ENCODE measurements at regions of chr3 and their contacts with region 1.

Region 1: GRCh38 chr3:48595526-48596121 is 495 bp upstream of the COL7A1 start:
- DNase-seq: peak; percentile 85
- H3K4me3 Mint-ChIP-seq: peak overlapping the region; percentile 67
- H3K27ac Mint-ChIP-seq: peak overlapping the region; percentile 82
- H3K4me1 Mint-ChIP-seq: peaks cover 13% of the 10 kb centered on the region
- H3K27me3 Mint-ChIP-seq: peaks cover 9% of the 10 kb centered on the region
- CTCF ChIP-seq: no peak

Region 2: DNA sequence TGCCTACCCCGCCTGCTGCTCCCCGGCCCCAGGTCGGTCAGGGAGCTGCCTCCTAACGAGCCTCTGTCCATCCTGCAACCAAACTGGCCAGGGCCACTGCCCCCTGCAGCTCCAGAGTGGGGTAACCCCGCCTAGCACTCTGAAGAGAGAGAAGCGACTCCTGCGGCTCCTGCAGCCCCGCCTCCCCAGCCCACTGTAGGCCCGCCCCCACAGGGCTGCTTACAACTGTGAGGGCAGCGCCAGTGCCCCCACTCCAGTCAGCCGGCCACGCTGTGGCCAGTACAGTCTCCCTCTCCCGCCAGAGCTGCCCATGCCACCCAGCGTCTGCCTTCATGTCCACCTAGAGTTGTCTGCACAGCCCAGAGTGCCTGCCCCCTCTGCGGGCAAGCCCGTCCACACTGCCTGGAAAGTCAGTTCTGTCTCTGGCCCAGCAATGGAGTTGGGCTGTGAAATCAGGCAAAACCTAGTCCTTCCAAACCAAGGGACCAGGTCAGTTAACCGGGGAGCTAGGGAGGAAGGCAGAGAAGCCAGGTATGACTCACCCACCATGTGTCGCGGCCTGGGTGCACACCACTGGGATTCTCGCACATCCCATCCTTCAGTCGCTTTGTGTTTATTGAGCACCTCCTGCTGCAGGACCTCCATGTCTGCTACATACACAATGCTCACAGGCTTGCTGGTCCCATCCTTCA is 34.4 kb before region 1 on chr3:
- CTCF ChIA-PET with region 1: no interaction called
- intact Hi-C with region 1: loop called (anchors 5 kb)
- DNase-seq: no peak
- H3K4me3 Mint-ChIP-seq: no peak overlapping the region
- H3K27ac Mint-ChIP-seq: no peak overlapping the region
- H3K4me1 Mint-ChIP-seq: peaks cover 52% of the 10 kb centered on the region
- H3K27me3 Mint-ChIP-seq: no peaks in the 10 kb centered on the region
- CTCF ChIP-seq: no peak